H1 (cell line): ENCODE measurements at regions of chr5 and their contacts with region 1.

Region 1: DNA sequence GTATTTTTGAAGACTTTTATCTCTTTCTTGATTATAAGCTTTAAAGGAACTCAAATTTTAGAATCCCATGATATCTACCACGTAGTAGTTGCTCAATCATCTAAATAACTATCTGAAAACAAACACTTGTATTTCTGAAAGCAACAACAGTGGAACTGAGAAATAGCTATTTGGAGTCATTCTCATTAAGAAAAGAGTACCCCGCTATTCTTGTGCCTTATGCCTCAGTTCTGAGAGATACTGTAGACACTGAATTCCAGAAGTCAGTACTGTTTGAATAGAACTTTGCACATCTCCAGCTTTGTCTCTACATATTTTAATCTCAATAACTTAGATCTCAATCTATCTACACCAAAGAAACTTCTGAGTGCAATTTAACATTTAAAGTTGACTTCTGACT is 11.4 kb downstream of the CHD1 start:
- DNase-seq: no peak
- H3K4me3 ChIP-seq: no peak overlapping the region
- H3K27ac ChIP-seq: no peak overlapping the region
- H3K4me1 ChIP-seq: no peaks in the 10 kb centered on the region
- H3K27me3 ChIP-seq: no peaks in the 10 kb centered on the region
- CTCF ChIP-seq: no peak
- EP300 ChIP-seq: no peak
- POLR2A ChIP-seq: no peak
- RAD21 ChIP-seq: no peak

Region 2: DNA sequence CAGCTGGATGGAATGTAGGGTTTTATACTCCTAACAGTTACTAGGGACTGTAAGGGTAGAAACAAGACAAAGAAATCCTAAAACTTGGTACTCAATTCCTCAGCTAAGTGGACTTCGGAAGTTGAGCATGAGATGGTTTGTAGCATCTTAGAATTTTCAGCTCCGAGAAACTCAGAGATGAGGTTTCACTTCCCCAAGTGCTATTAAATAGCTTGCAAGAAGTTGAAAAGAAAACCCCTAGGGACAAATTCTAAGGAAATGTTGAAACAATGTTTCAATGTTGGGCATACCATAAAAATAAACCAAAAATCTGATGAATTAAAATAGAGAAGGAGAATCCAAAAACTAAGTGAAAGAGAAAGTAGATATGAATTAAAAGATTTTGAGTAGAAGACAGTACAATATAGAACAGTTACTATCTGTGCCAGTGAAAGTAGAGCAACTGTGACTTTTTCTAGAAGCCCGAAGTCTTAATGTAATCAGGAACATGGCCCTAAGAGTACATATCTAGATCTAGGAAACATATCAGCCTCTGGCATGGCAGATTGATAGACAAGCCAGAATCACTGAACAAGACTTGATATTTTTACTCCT is 452.6 kb before region 1 on chr5:
- CTCF ChIA-PET with region 1: no interaction called
- POLR2A ChIA-PET with region 1: no interaction called
- DNase-seq: no peak
- H3K4me3 ChIP-seq: no peak overlapping the region
- H3K27ac ChIP-seq: no peak overlapping the region
- H3K4me1 ChIP-seq: no peaks in the 10 kb centered on the region
- H3K27me3 ChIP-seq: no peaks in the 10 kb centered on the region
- CTCF ChIP-seq: no peak
- EP300 ChIP-seq: no peak
- POLR2A ChIP-seq: no peak
- RAD21 ChIP-seq: no peak

Region 3: GRCh38 chr5:98928873-98929696 is 11.7 kb after region 1 on chr5 and contains the start of gene CHD1:
- CTCF ChIA-PET with region 1: interaction called, 7 read pairs
- POLR2A ChIA-PET with region 1: interaction called, 12 read pairs
- DNase-seq: peak; percentile 88
- H3K4me3 ChIP-seq: peak within 1 kb of the TSS; percentile 60 to 90 (median 87)
- H3K27ac ChIP-seq: peak within 1 kb of the TSS; percentile 89
- H3K4me1 ChIP-seq: peaks cover 0 to 3% (median 0%) of the 10 kb centered on the region in 4 experiments; a peak in 1 of 7 replicates
- H3K27me3 ChIP-seq: no peaks in the 10 kb centered on the region
- CTCF ChIP-seq: no peak
- EP300 ChIP-seq: no peak
- POLR2A ChIP-seq: peak; percentile 54 to 84
- RAD21 ChIP-seq: no peak
- total RNA-seq, gene CHD1: 50.8 and 53.0 TPM in 2 replicates

Region 4: DNA sequence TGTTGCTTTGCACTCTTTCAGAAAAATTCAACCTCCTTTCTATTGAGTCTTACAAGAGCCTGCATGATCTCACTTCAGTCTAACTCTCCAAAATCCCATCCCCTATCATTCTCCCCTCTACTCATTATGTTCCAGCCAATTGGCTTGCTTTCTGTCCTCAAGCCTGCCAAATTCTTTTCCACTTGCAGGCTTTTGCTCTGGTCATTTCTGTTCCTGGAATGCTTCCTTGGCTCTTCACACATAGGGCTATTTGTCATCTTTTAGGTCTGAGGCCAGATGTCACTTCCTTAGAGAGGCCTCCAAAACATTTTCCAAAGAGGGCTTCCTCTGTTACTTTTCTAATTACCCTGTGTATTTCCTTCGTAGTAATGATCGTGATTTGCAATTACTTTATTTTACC is 23.1 kb after region 1 on chr5:
- CTCF ChIA-PET with region 1: no interaction called
- POLR2A ChIA-PET with region 1: no interaction called
- DNase-seq: no peak
- H3K4me3 ChIP-seq: no peak overlapping the region
- H3K27ac ChIP-seq: no peak overlapping the region
- H3K4me1 ChIP-seq: peaks cover 0 to 15% (median 4%) of the 10 kb centered on the region in 4 experiments; a peak in 2 of 7 replicates
- H3K27me3 ChIP-seq: no peaks in the 10 kb centered on the region
- CTCF ChIP-seq: no peak
- EP300 ChIP-seq: no peak
- POLR2A ChIP-seq: no peak
- RAD21 ChIP-seq: no peak